Common myeloid progenitor, CD34-positive (primary cell): ENCODE measurements at regions of chr1 and their contacts with region 1.

Region 1: DNA sequence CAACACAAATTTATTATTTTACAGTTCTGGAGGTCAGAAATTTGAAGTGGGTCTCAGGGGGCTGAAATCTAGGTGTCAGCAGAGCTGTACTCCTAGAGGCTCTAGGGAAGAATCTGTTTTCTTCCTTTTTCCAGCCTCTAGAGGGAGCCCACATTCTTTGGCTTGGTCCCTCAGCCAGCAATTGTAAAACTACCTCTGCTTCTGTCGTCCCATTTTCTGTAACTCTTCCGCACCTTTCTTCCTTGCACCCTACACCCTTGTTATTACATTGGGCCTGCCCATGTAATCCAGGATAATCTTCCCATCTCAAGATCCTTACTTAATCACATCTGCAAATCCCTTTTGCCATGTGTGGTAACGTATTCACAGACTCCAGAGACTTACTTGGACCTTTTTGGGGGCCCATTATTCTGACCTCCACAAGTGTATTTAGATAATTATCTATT is 24.8 kb upstream of the THEM4 start:
- DNase-seq: peak; percentile 69 to 81 (median 74)
- H3K4me3 ChIP-seq: peak overlapping the region in 1 of 7 experiments; percentile 42
- H3K27ac ChIP-seq: no peak overlapping the region
- H3K4me1 ChIP-seq: peaks cover 0 to 9% (median 3%) of the 10 kb centered on the region in 4 experiments
- H3K27me3 ChIP-seq: no peaks in the 10 kb centered on the region

Region 2: DNA sequence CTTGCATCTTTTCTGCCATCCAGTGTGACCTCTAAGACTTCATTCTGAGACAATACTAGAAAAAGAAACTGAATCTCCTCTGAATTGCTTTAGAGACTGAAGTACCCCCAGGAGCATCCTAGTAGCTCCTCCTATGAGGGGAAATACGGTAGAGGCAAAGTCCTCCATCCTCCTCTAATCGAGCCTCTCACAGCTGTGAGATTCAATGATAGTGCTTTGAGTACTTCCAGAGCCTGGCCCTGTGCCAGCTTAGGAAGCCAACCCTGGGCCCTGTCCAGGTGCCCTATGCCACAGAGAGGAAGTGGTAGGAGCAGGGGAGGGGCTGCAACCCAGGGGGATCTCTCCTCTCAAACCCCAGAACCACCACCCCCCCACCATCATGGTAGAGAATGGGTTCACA is 113.1 kb before region 1 on chr1:
- CTCF ChIA-PET with region 1: no interaction called
- POLR2A ChIA-PET with region 1: no interaction called
- DNase-seq: peak; percentile 46 to 80 (median 78)
- H3K4me3 ChIP-seq: peak overlapping the region in 1 of 7 experiments; percentile 12
- H3K27ac ChIP-seq: no peak overlapping the region
- H3K4me1 ChIP-seq: peaks cover 6 to 58% (median 46%) of the 10 kb centered on the region in 4 experiments
- H3K27me3 ChIP-seq: no peaks in the 10 kb centered on the region

Region 3: DNA sequence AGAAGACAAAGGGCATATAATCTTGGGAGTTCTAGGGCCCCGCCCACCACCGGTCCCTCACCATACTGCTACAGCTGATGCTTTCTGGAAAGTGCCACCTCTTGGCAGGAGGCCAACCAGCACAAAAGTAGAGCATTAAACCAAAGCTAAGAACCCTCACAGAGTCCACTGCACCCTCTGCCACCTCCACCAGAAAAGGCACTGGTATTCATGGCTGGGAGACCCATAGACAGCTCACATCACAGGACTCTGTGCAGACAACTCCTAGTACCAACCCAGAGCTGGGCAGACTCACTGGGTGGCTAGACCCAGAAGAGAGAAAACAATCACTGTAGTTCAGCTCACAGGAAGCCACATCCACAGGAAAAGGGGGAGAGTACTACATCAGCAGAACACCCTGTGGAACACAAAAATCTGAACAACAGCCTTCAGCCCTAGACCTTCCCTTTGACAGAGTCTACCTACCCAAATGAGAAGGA is 35.5 kb before region 1 on chr1:
- CTCF ChIA-PET with region 1: interaction called, 17 read pairs
- POLR2A ChIA-PET with region 1: no interaction called
- DNase-seq: peak; percentile 20 to 52 (median 33)
- H3K4me3 ChIP-seq: peak overlapping the region in 4 of 7 experiments; percentile 25 to 60 (median 40)
- H3K27ac ChIP-seq: no peak overlapping the region
- H3K4me1 ChIP-seq: peaks cover 0 to 22% (median 12%) of the 10 kb centered on the region in 4 experiments
- H3K27me3 ChIP-seq: no peaks in the 10 kb centered on the region

Region 4: DNA sequence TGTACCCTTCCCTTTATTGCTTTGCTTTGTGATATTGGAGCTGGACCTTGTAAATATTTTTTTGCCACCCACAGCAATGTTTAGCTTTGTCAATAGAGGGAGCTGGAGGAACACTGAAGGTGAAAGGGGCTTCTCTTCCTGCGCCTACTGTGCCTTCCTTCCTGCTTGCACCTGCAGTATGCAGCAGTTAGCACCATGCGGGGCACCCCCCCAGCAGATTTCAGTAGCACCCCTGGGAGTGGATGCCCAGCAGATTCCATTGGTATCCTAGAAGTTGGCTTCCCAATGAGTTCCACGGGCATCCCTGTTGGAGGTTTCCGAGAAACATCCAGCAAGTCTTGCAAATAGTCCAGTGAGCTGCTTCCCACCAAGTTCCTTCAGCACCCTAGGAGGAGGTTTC is 34.0 kb after region 1 on chr1:
- CTCF ChIA-PET with region 1: interaction called, 103 read pairs
- POLR2A ChIA-PET with region 1: no interaction called
- DNase-seq: peak; percentile 48 to 66 (median 55)
- H3K4me3 ChIP-seq: no peak overlapping the region
- H3K27ac ChIP-seq: no peak overlapping the region
- H3K4me1 ChIP-seq: peaks cover 0 to 25% (median 16%) of the 10 kb centered on the region in 4 experiments
- H3K27me3 ChIP-seq: peaks cover 0 to 2% (median 0%) of the 10 kb centered on the region in 5 experiments

Region 5: DNA sequence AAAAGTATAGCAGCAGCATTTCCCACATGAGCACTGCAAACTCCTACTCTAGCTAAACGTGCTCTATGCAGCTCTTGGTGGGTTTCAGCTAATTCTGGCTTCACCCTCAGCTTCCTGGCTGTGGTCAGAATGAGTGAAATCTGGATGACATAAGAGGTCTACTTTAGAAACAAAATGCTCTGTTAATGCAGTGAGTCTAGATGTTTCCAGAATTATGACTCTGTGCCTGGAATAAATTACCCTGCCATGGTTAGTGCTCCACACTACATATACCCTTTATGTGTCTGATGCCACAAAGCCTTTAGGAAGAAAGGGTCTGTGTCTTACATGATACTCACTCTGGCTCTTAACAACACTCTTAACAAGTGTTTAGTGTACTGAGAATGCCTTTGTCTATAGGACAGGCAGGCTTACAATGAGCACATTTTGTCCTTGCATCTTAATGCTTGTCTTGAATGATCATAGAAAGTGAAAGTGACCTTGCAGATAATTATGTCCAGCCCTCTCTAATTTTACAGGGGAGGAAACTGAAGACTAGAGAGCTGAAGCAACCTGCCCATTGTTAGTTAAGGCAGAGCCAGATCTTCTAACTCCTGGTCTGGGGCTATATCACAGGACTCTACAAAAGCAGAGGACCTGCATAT is 50.4 kb after region 1 on chr1:
- CTCF ChIA-PET with region 1: interaction called, 11 read pairs
- POLR2A ChIA-PET with region 1: no interaction called
- DNase-seq: peak; percentile 25 to 73 (median 68)
- H3K4me3 ChIP-seq: peak overlapping the region in 1 of 7 experiments; percentile 34
- H3K27ac ChIP-seq: no peak overlapping the region
- H3K4me1 ChIP-seq: peaks cover 5 to 25% (median 16%) of the 10 kb centered on the region in 4 experiments
- H3K27me3 ChIP-seq: peaks cover 0 to 20% (median 0%) of the 10 kb centered on the region in 5 experiments